Left cardiac atrium (tissue), 4 donors: ENCODE measurements at regions of chr9 and their contacts with region 1.

Region 1: GRCh38 chr9:93453047-93453914 is at the start of gene FAM120AOS:
- DNase-seq: peak; percentile 93
- ATAC-seq: peak; percentile 86 to 88
- total RNA-seq, gene FAM120AOS: 34.5 to 34.7 TPM

Region 2: GRCh38 chr9:93566408-93567270 is 113.4 kb after region 1 on chr9:
- intact Hi-C with region 1: loop called (anchors 5 to 10 kb)
- DNase-seq: peak; percentile 99
- ATAC-seq: peak; percentile 99

Region 3: GRCh38 chr9:93575796-93576257 is 122.5 kb after region 1 on chr9:
- intact Hi-C with region 1: loop called in 1 of 2 experiments (anchors 10 kb)
- DNase-seq: peak; percentile 65
- ATAC-seq: peak; percentile 45 to 50

Region 4: GRCh38 chr9:93996863-93997262 is 543.6 kb after region 1 on chr9:
- intact Hi-C with region 1: no loop called
- DNase-seq: no peak
- ATAC-seq: no peak